GM10248 (cell line): ENCODE measurements at regions of chr12 and their contacts with region 1.

Region 1: GRCh38 chr12:49244176-49244575 is 20.7 kb upstream of the TUBA1C start:
- DNase-seq: no peak
- CTCF ChIP-seq: no peak

Region 2: GRCh38 chr12:49232940-49233841 is 11.0 kb before region 1 on chr12:
- CTCF ChIA-PET with region 1: interaction called, 33 read pairs
- POLR2A ChIA-PET with region 1: no interaction called
- DNase-seq: no peak
- CTCF ChIP-seq: no peak

Region 3: DNA sequence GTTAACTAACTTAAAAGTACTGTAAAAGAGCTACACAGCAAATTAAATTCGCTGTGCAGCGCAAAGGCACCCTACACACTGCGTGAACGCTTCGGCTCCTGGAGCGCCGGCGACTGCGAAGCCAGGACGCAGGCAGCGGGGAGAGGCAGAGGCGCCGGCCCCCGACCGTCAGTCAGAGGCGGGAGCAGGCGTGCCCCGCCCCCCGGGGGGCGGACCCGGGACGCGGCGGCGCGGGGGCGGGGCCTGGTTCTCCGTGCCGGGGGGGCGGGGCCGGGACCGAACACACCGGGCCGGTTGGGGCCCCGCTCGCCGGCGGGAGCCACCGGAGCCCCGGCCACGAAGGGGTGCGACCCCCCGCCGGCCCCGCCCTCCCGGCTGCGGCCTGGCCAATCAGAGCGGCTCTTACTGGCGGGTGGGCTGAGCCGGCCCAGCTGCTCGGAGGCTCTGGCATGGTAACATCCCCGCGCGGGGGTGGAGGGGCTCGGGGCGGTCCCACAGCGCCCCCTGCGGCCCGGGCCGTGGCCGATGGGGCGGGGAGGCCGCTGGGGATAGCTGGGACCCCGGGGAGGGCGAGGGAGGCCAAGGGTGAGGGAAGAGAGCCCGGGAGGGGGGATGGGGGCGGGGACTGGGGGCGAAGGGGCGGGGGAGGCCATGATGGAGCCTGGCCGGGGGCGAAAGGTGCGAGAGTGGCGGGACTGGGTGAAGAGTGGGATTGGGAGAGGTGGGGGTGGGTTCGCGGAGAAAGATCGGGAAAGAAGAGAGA is 379.1 kb after region 1 on chr12 and contains the start of gene PRPF40B:
- CTCF ChIA-PET with region 1: no interaction called
- POLR2A ChIA-PET with region 1: no interaction called
- DNase-seq: peak; percentile 96
- CTCF ChIP-seq: peak; percentile 70